Psoas muscle (tissue), 8 donors: ENCODE measurements at regions of chr17 and their contacts with region 1.

Region 1: GRCh38 chr17:17151962-17152361 is 54.2 kb downstream of the PLD6 start:
- DNase-seq: peak; percentile 95 to 97
- ATAC-seq: peak; percentile 93 to 96 (median 95)
- H3K4me3 ChIP-seq: no peak overlapping the region
- H3K27ac ChIP-seq: peak overlapping the region; percentile 90
- H3K4me1 ChIP-seq: peaks cover 37% of the 10 kb centered on the region
- H3K27me3 ChIP-seq: no peaks in the 10 kb centered on the region
- CTCF ChIP-seq: no peak

Region 2: GRCh38 chr17:16991349-16992009 is 160.5 kb before region 1 on chr17:
- intact Hi-C with region 1: no loop called
- DNase-seq: peak; percentile 85 to 91
- ATAC-seq: peak; percentile 78 to 88 (median 80)
- H3K4me3 ChIP-seq: no peak overlapping the region
- H3K27ac ChIP-seq: no peak overlapping the region
- H3K4me1 ChIP-seq: no peaks in the 10 kb centered on the region
- H3K27me3 ChIP-seq: no peaks in the 10 kb centered on the region
- CTCF ChIP-seq: peak; percentile 68

Region 3: GRCh38 chr17:17186051-17186450 is 34.1 kb after region 1 on chr17:
- intact Hi-C with region 1: loop called in 1 of 2 experiments (anchors 5 kb)
- DNase-seq: no peak
- ATAC-seq: no peak
- H3K4me3 ChIP-seq: no peak overlapping the region
- H3K27ac ChIP-seq: no peak overlapping the region
- H3K4me1 ChIP-seq: peaks cover 11% of the 10 kb centered on the region
- H3K27me3 ChIP-seq: no peaks in the 10 kb centered on the region
- CTCF ChIP-seq: no peak